Activated CD4-positive, alpha-beta memory T cell treated with anti-CD3 and anti-CD28 coated beads for 36 hours (primary cell): ENCODE measurements at regions of chr2 and their contacts with region 1.

Region 1: GRCh38 chr2:37585982-37586621 is 85.3 kb downstream of the CDC42EP3 start:
- DNase-seq: peak; percentile 85
- H3K4me3 Mint-ChIP-seq: peak overlapping the region; percentile 56
- H3K27ac Mint-ChIP-seq: peak overlapping the region; percentile 92
- H3K4me1 Mint-ChIP-seq: peaks cover 91% of the 10 kb centered on the region
- H3K27me3 Mint-ChIP-seq: no peaks in the 10 kb centered on the region

Region 2: GRCh38 chr2:37376421-37377186 is 209.5 kb before region 1 on chr2:
- CTCF ChIA-PET with region 1: no interaction called
- POLR2A ChIA-PET with region 1: no interaction called
- intact Hi-C with region 1: loop called (anchors 2 kb)
- DNase-seq: peak; percentile 53
- H3K4me3 Mint-ChIP-seq: peak overlapping the region; percentile 20
- H3K27ac Mint-ChIP-seq: peak overlapping the region; percentile 58
- H3K4me1 Mint-ChIP-seq: peaks cover 30% of the 10 kb centered on the region
- H3K27me3 Mint-ChIP-seq: peaks cover 53% of the 10 kb centered on the region

Region 3: GRCh38 chr2:37570773-37571586 is 15.1 kb before region 1 on chr2:
- CTCF ChIA-PET with region 1: no interaction called
- POLR2A ChIA-PET with region 1: interaction called, 4 read pairs
- intact Hi-C with region 1: loop called (anchors 1 kb)
- DNase-seq: peak; percentile 85
- H3K4me3 Mint-ChIP-seq: no peak overlapping the region
- H3K27ac Mint-ChIP-seq: peak overlapping the region; percentile 16
- H3K4me1 Mint-ChIP-seq: peaks cover 29% of the 10 kb centered on the region
- H3K27me3 Mint-ChIP-seq: no peaks in the 10 kb centered on the region

Region 4: GRCh38 chr2:37615804-37616676 is 29.9 kb after region 1 on chr2:
- CTCF ChIA-PET with region 1: interaction called, 8 read pairs
- POLR2A ChIA-PET with region 1: no interaction called
- intact Hi-C with region 1: loop called (anchors 1 kb)
- DNase-seq: peak; percentile 72
- H3K4me3 Mint-ChIP-seq: no peak overlapping the region
- H3K27ac Mint-ChIP-seq: peak overlapping the region; percentile 77
- H3K4me1 Mint-ChIP-seq: peaks cover 63% of the 10 kb centered on the region
- H3K27me3 Mint-ChIP-seq: no peaks in the 10 kb centered on the region

Region 5: GRCh38 chr2:37672104-37672869 is 86.2 kb after region 1 on chr2:
- CTCF ChIA-PET with region 1: no interaction called
- POLR2A ChIA-PET with region 1: interaction called, 3 read pairs
- intact Hi-C with region 1: loop called (anchors 5 kb)
- DNase-seq: peak; percentile 78
- H3K4me3 Mint-ChIP-seq: peak overlapping the region; percentile 95
- H3K27ac Mint-ChIP-seq: peak overlapping the region; percentile 80
- H3K4me1 Mint-ChIP-seq: peaks cover 39% of the 10 kb centered on the region
- H3K27me3 Mint-ChIP-seq: no peaks in the 10 kb centered on the region

Region 6: GRCh38 chr2:37832590-37833197 is 246.6 kb after region 1 on chr2:
- CTCF ChIA-PET with region 1: interaction called, 3 read pairs
- POLR2A ChIA-PET with region 1: no interaction called
- intact Hi-C with region 1: loop called (anchors 5 kb)
- DNase-seq: peak; percentile 86
- H3K4me3 Mint-ChIP-seq: no peak overlapping the region
- H3K27ac Mint-ChIP-seq: no peak overlapping the region
- H3K4me1 Mint-ChIP-seq: peaks cover 30% of the 10 kb centered on the region
- H3K27me3 Mint-ChIP-seq: no peaks in the 10 kb centered on the region